Transverse colon (tissue), 4 donors: ENCODE measurements at regions of chr3 and their contacts with region 1.

Region 1: DNA sequence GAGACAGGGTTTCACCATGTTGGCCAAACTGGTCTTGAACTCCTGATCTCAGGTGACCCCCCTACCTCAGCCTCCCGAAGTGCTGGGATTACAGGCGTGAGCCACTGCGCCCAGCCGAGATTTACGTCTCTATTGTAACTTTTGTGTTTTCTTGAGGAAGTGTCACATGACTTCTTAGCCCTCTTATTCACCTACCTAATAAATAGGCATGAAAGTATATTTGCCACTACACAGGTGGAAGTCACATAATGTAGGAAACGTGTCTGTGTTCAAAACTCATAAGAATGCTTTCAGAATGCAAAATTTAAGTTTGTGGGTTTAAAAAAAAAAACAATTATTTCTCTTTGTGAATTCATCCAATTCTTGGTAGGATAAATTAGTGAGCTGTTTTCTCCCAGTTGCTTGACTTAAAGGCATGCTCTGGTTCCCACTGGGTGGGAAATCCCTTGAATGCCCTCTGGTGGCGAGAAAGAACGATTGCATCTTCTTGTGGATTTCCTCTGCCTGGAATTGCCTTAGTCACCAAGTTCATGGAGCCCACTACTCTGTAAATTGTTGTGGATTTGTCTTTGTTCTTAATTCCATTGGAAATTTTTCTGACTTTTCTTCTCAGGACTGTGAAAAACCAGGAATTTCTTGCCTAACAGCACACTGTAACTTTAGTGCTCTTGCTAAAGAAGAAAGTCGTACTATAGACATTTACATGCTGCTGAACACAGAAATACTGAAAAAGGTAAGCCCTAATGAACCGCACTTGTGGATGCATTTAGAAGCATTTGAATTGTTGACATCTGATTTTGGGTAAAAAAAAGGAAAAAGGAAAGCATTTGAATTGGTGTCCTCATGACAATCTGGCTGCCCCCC is 82.2 kb upstream of the CTDSPL start:
- DNase-seq: no peak
- H3K4me3 ChIP-seq: no peak overlapping the region
- H3K27ac ChIP-seq: no peak overlapping the region
- H3K4me1 ChIP-seq: peaks cover 0 to 7% (median 0%) of the 10 kb centered on the region in 4 donors
- H3K27me3 ChIP-seq: no peaks in the 10 kb centered on the region
- CTCF ChIP-seq: peak; percentile 73 to 86 (median 82)
- EP300 ChIP-seq: no peak
- POLR2A ChIP-seq: no peak

Region 2: GRCh38 chr3:37417297-37418082 is 362.0 kb before region 1 on chr3:
- in situ Hi-C with region 1: no loop called
- intact Hi-C with region 1: no loop called
- DNase-seq: no peak
- H3K4me3 ChIP-seq: no peak overlapping the region
- H3K27ac ChIP-seq: no peak overlapping the region
- H3K4me1 ChIP-seq: no peaks in the 10 kb centered on the region
- H3K27me3 ChIP-seq: no peaks in the 10 kb centered on the region
- CTCF ChIP-seq: no peak
- EP300 ChIP-seq: no peak
- POLR2A ChIP-seq: no peak

Region 3: GRCh38 chr3:37435572-37435971 is 343.9 kb before region 1 on chr3:
- in situ Hi-C with region 1: loop called in 1 of 4 experiments (anchors 25 kb)
- intact Hi-C with region 1: no loop called
- DNase-seq: no peak
- H3K4me3 ChIP-seq: no peak overlapping the region
- H3K27ac ChIP-seq: no peak overlapping the region
- H3K4me1 ChIP-seq: no peaks in the 10 kb centered on the region
- H3K27me3 ChIP-seq: no peaks in the 10 kb centered on the region
- CTCF ChIP-seq: no peak
- EP300 ChIP-seq: no peak
- POLR2A ChIP-seq: no peak

Region 4: GRCh38 chr3:37526511-37526910 is 253.0 kb before region 1 on chr3:
- in situ Hi-C with region 1: no loop called
- intact Hi-C with region 1: loop called (anchors 5 kb)
- DNase-seq: peak; percentile 14
- H3K4me3 ChIP-seq: no peak overlapping the region
- H3K27ac ChIP-seq: peak overlapping the region; percentile 34 to 49 (median 36)
- H3K4me1 ChIP-seq: peaks cover 0 to 7% (median 0%) of the 10 kb centered on the region in 4 donors
- H3K27me3 ChIP-seq: no peaks in the 10 kb centered on the region
- CTCF ChIP-seq: no peak
- EP300 ChIP-seq: no peak
- POLR2A ChIP-seq: no peak

Region 5: GRCh38 chr3:38411591-38411990 is 632.1 kb after region 1 on chr3:
- in situ Hi-C with region 1: no loop called
- intact Hi-C with region 1: no loop called
- DNase-seq: no peak
- H3K4me3 ChIP-seq: no peak overlapping the region
- H3K27ac ChIP-seq: no peak overlapping the region
- H3K4me1 ChIP-seq: no peaks in the 10 kb centered on the region
- H3K27me3 ChIP-seq: no peaks in the 10 kb centered on the region
- CTCF ChIP-seq: no peak
- EP300 ChIP-seq: no peak
- POLR2A ChIP-seq: no peak